Activated CD8-positive, alpha-beta T cell treated with anti-CD3 and anti-CD28 coated beads for 36 hours (primary cell): ENCODE measurements at regions of chr1 and their contacts with region 1.

Region 1: GRCh38 chr1:2506007-2506860 is 20.2 kb downstream of the PANK4 start:
- DNase-seq: no peak
- ATAC-seq: peak; percentile 58
- H3K4me3 Mint-ChIP-seq: no peak overlapping the region
- H3K27ac Mint-ChIP-seq: no peak overlapping the region
- H3K4me1 Mint-ChIP-seq: no peaks in the 10 kb centered on the region
- H3K27me3 Mint-ChIP-seq: no peaks in the 10 kb centered on the region
- CTCF ChIP-seq: no peak

Region 2: DNA sequence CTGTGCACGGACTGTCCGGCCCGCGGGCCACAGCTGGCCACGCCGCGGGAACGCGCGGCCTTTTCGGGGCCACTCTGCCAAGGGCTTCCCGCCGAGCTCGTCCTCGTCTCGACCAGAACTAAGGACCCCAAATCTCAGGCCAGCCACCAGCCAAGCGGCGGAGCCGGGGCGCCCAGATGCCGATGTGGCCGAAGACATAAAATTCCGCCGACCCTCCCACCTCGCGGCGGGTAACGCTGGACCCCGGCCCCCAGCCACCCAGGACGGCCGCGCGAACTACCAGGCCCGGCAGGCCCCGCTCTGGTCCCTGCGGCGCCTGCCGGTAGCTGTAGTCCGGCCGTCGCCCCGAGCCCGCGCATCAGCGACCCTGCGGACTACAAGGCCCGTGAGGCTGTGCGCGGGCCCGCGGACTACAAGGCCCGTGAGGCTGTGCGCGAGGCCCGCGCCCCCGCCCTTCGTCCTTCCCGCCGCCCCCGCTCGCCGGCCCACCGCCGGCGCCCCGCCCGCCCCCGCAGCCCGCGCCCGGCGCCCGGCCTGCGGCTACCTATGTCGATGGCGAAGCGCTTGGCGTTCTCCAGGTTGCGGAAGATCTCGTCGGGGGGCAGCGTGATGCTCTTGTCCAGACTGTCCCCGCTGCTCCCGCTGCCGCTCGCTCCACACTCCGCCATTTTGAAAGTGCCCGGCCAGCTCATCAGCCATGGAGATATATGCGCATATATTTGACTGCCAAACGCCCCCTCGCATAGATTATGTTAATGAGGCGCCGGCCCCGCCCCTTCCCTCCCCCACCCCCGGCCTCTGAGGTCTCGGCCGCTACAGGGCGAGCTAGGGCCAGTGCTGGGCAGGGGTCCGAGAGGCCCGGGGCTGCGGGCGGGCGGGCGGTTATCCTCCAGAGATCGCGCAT is 19.9 kb after region 1 on chr1 and contains the start of gene PANK4:
- CTCF ChIA-PET with region 1: interaction called, 6 read pairs
- POLR2A ChIA-PET with region 1: interaction called, 17 read pairs
- intact Hi-C with region 1: no loop called
- DNase-seq: peak; percentile 94
- ATAC-seq: peak; percentile 83
- H3K4me3 Mint-ChIP-seq: peak within 1 kb of the TSS; percentile 81
- H3K27ac Mint-ChIP-seq: peak within 1 kb of the TSS; percentile 98
- H3K4me1 Mint-ChIP-seq: peaks cover 47% of the 10 kb centered on the region
- H3K27me3 Mint-ChIP-seq: peaks cover 7% of the 10 kb centered on the region
- CTCF ChIP-seq: no peak
- total RNA-seq, gene PANK4: 39.0 to 40.6 TPM